A673 (cell line): ENCODE measurements at regions of chr12 and their contacts with region 1.

Region 1: DNA sequence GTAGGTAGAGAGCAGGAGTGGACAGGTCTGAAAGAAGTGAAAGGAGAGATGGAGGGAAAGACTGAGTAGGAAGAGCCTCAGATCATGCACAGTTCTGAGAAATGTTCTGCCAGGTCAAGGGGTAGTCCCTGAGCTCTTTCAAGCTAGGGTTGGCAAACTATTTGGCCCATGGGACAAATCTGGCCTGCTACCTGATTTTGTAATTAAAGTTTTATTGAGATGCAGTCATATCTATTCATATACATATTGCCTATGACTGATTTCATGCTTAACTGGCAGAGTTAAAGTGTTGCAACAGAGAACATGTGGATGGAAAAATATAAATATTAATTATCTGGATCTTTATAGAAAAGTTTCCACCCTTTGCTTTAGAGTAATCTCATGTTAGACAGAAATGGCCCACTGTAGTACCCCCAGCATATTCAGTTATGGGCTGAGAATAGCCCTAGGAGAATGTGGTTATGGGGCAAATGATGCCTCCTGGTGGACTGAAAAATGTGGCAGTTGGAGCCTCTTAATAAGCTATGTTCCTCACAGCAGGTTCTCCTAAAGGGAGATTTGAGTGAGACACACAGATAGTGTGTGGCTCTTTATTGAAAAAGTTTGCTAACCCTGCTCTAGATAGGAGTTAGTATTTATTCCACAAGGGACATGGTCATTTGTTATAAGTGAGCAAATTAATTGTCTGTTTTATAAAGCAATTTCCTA is 476.9 kb downstream of the LRIG3 start:
- DNase-seq: peak; percentile 57
- H3K4me3 ChIP-seq: no peak overlapping the region
- H3K27ac ChIP-seq: no peak overlapping the region
- H3K4me1 ChIP-seq: no peaks in the 10 kb centered on the region
- H3K27me3 ChIP-seq: no peaks in the 10 kb centered on the region
- CTCF ChIP-seq: peak; percentile 76

Region 2: DNA sequence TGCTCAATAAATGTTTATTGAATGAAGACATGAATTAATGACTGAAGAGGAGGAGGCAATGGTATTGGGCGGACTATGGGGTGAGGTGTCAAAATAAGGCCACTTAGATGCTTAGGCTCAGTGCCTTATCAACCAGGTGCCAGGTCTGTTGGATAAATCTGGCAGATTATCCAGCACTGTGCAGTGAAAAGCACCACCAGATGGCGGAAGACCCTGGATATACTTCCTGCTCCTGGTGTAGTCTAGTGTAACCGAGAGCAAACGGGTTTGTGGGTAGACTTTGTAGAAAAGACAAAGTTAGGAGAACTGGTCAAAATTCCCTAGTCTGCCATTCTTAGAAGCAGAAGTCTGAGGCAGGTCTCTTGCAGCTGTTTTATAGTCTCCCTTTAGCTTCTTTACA is 195.8 kb before region 1 on chr12:
- CTCF ChIA-PET with region 1: no interaction called
- POLR2A ChIA-PET with region 1: no interaction called
- intact Hi-C with region 1: loop called (anchors 10 kb)
- DNase-seq: peak; percentile 50
- H3K4me3 ChIP-seq: no peak overlapping the region
- H3K27ac ChIP-seq: no peak overlapping the region
- H3K4me1 ChIP-seq: peaks cover 15% of the 10 kb centered on the region
- H3K27me3 ChIP-seq: peaks cover 3% of the 10 kb centered on the region
- CTCF ChIP-seq: peak; percentile 65

Region 3: DNA sequence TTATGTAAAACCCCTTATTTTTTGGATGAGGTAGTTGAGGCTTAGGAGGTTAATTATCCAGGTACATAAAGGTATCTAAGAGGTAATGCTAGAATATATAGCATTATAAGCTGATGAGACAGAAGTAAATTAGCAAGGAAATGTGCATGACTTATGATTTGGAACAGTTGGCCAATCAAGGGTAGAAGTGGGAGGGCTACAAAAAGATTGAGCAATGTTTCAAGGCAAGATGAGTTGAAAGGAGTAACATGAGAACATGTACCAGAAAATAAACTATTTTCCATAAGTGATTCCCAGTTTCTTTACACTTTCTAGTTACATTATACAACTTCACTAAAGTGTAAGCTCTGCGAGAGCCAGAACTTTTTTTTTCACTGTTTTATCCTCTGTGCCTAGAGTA is 185.9 kb after region 1 on chr12:
- CTCF ChIA-PET with region 1: no interaction called
- POLR2A ChIA-PET with region 1: no interaction called
- intact Hi-C with region 1: no loop called
- DNase-seq: no peak
- H3K4me3 ChIP-seq: no peak overlapping the region
- H3K27ac ChIP-seq: no peak overlapping the region
- H3K4me1 ChIP-seq: no peaks in the 10 kb centered on the region
- H3K27me3 ChIP-seq: no peaks in the 10 kb centered on the region
- CTCF ChIP-seq: no peak

Region 4: DNA sequence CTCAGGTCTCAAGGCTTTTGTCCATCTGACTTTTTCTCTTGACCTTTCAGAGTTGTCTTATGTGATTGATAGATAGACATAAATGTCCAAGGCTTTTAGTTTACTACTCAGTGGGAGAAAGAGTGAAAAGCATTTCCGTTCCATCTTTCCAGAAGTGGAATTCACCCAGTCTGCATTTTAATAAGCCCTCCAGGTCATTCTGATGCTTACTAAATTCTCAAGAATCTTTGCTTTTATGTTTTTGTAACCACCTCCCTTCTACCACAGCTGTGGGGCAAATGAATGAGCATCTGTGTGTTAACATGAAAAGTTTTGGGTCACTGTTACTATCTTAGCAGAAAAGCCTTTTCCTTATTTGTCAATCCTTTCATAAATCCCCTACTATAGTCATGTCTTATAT is 225.4 kb after region 1 on chr12:
- CTCF ChIA-PET with region 1: no interaction called
- POLR2A ChIA-PET with region 1: no interaction called
- intact Hi-C with region 1: no loop called
- DNase-seq: no peak
- H3K4me3 ChIP-seq: no peak overlapping the region
- H3K27ac ChIP-seq: no peak overlapping the region
- H3K4me1 ChIP-seq: peaks cover 5% of the 10 kb centered on the region
- H3K27me3 ChIP-seq: no peaks in the 10 kb centered on the region
- CTCF ChIP-seq: no peak